ENCODE measurements at regions of chrX and their contacts with region 1.

Region 1: DNA sequence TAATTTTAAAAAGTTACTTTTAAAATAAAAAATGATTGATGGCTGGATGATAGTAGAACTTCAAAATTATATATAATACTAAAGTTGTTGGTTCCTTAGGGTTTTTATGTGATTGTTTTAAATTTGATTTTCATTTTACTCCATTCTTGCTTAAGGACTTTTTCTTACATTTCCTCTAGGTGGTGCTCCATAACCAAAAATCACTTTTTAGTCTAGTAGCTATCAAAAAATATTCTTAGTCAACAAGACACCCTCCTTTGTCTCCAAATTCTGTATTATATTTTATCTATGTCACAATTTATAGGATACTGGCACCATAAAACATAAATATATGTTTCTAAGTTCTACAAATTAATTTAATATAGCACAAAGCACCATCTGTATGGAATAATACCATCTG is 67.2 kb upstream of the BRWD3 start:
- H3K4me3 ChIP-seq: no peak overlapping the region
- H3K27ac ChIP-seq: no peak overlapping the region
- H3K4me1 ChIP-seq: no peaks in the 10 kb centered on the region
- CTCF ChIP-seq: no peak

Region 2: DNA sequence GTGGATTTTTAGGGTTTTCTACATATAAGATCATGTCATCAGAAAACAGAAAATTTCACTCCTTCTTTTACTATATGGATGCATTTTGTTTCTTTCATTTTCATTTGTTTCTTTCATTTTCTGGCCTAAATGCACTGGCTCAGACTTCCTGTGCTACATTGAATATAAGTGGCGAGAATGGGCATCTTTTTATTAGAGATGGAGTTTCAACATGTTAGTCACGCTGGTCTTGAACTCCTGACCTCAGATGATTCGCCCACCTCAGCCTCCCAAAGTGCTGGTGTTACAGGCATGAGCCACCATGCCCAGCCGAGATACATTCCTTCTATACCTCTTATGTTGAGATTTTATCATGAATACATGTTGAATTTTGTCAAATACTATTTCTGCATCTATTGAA is 129.0 kb before region 1 on chrX:
- CTCF ChIA-PET with region 1: no interaction called
- POLR2A ChIA-PET with region 1: no interaction called
- H3K4me3 ChIP-seq: no peak overlapping the region
- H3K27ac ChIP-seq: no peak overlapping the region
- H3K4me1 ChIP-seq: no peaks in the 10 kb centered on the region
- CTCF ChIP-seq: no peak

Region 3: GRCh38 chrX:80808160-80808735 is 68.6 kb before region 1 on chrX:
- CTCF ChIA-PET with region 1: no interaction called
- POLR2A ChIA-PET with region 1: no interaction called
- H3K4me3 ChIP-seq: peak overlapping the region; percentile 43
- H3K27ac ChIP-seq: peak overlapping the region; percentile 57; the same call in 1 of the 2 replicates
- H3K4me1 ChIP-seq: no peaks in the 10 kb centered on the region
- CTCF ChIP-seq: no peak

Region 4: GRCh38 chrX:81195712-81196111 is 318.8 kb after region 1 on chrX:
- CTCF ChIA-PET with region 1: interaction called, 12 read pairs
- POLR2A ChIA-PET with region 1: no interaction called
- H3K4me3 ChIP-seq: no peak overlapping the region
- H3K27ac ChIP-seq: no peak overlapping the region
- H3K4me1 ChIP-seq: no peaks in the 10 kb centered on the region
- CTCF ChIP-seq: peak; percentile 54; the same call in 1 of the 2 replicates

Measured in HEK293 (cell line).